Activated CD4-positive, alpha-beta memory T cell treated with anti-CD3 and anti-CD28 coated beads, Interleukin-2, amount 10 ng/mL, durations not matched to agents 7 days and 5 days (primary cell): ENCODE measurements at regions of chr9 and their contacts with region 1.

Region 1: DNA sequence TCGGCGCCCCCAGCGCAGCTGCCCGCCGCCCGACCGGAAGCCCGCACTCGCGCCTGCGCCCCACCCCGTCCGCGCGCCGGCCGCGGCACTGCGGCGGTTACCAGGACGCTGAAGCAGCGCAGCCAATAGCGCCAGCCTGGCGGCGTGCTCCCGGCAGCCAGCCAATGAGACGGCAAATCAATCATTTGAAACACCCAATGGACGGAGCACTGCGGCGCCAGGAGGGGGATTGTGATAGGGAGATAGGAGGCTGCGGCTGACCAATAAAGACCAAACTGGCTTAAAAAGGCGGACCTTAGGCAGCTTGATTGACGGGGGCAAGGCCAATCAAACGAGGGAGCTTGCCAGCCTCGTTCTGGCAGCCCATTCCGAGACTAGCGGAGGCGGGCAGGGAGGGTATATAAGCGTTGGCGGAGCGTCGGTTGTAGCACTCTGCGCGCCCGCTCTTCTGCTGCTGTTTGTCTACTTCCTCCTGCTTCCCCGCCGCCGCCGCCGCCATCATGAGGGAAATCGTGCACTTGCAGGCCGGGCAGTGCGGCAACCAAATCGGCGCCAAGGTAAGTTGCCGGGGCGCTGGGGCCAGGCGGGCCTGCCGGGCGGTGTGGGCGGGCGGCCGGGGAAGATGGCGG is at the start of gene TUBB4B:
- DNase-seq: peak; percentile 99
- H3K4me3 Mint-ChIP-seq: peak within 1 kb of the TSS; percentile 88
- H3K27ac Mint-ChIP-seq: peak within 1 kb of the TSS; percentile 94
- H3K4me1 Mint-ChIP-seq: peaks cover 47% of the 10 kb centered on the region
- H3K27me3 Mint-ChIP-seq: no peaks in the 10 kb centered on the region
- total RNA-seq, gene TUBB4B: 314 to 319 TPM

Region 2: DNA sequence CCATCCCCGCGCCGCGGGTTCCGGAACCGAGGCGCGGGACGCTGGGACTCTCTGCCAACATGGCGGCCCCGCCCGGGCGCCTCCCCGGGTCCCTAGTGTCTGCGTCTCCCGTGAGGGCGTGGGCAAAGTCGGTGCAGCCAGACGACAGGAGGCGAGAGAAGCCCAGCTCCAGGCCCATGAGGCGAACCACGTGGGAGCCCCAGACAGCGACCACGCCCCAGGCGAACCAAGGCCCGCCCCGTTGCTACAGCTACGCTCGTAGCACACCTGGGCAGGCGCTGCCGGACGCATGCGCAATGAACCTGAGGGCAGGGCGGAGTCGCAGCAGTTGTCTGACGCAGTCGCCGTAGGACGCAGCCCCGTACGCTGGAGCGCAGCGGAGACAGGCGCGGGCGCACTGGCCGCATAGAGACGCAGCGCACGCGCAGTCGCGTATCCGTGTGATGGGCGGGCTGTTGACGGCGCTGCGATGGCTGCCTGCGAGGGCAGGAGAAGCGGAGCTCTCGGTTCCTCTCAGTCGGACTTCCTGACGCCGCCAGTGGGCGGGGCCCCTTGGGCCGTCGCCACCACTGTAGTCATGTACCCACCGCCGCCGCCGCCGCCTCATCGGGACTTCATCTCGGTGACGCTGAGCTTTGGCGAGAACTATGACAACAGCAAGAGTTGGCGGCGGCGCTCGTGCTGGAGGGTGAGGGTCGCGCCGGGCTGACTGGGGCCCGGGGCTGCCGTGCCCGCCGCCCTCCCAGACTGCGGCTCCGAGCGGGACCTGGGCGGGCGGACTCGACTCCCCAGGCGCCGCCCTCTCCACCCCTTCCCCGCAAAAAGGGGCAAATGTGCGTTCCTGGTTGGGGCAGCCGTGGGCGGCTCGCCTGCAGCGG is 154.2 kb before region 1 on chr9 and contains the start of gene MAN1B1:
- CTCF ChIA-PET with region 1: interaction called, 10 read pairs
- POLR2A ChIA-PET with region 1: interaction called, 26 read pairs
- DNase-seq: peak; percentile 100
- H3K4me3 Mint-ChIP-seq: peak within 1 kb of the TSS; percentile 89
- H3K27ac Mint-ChIP-seq: peak within 1 kb of the TSS; percentile 90
- H3K4me1 Mint-ChIP-seq: peaks cover 46% of the 10 kb centered on the region
- H3K27me3 Mint-ChIP-seq: no peaks in the 10 kb centered on the region
- total RNA-seq, gene MAN1B1: 51.4 to 51.9 TPM

Region 3: DNA sequence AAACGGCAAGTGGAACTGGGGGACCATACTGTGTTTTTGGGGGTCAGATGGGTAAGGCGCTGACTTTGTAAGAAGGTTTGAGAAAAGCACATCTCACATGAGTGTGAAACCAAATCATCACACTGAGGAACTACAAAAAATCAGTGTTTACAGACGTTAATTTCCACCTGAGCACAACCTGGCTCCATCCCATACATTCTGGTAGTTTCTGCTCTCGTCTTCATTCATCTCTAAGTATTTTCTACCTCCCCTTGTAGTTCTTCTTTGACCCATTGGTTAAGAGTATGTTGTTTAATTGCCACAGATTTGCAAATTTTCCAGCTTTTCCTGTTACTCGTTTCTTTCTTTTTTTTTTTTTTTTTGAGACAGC is 117.5 kb before region 1 on chr9:
- CTCF ChIA-PET with region 1: interaction called, 21 read pairs
- POLR2A ChIA-PET with region 1: interaction called, 14 read pairs
- DNase-seq: no peak
- H3K4me3 Mint-ChIP-seq: no peak overlapping the region
- H3K27ac Mint-ChIP-seq: no peak overlapping the region
- H3K4me1 Mint-ChIP-seq: peaks cover 32% of the 10 kb centered on the region
- H3K27me3 Mint-ChIP-seq: no peaks in the 10 kb centered on the region

Region 4: GRCh38 chr9:137200311-137201204 is 40.4 kb before region 1 on chr9 and contains the start of gene TPRN:
- CTCF ChIA-PET with region 1: interaction called, 4 read pairs
- POLR2A ChIA-PET with region 1: interaction called, 27 read pairs
- DNase-seq: peak; percentile 99
- H3K4me3 Mint-ChIP-seq: peak within 1 kb of the TSS; percentile 78
- H3K27ac Mint-ChIP-seq: peak within 1 kb of the TSS; percentile 70
- H3K4me1 Mint-ChIP-seq: peaks cover 35% of the 10 kb centered on the region
- H3K27me3 Mint-ChIP-seq: no peaks in the 10 kb centered on the region
- total RNA-seq, gene TPRN: 8.5 to 9.4 TPM

Region 5: DNA sequence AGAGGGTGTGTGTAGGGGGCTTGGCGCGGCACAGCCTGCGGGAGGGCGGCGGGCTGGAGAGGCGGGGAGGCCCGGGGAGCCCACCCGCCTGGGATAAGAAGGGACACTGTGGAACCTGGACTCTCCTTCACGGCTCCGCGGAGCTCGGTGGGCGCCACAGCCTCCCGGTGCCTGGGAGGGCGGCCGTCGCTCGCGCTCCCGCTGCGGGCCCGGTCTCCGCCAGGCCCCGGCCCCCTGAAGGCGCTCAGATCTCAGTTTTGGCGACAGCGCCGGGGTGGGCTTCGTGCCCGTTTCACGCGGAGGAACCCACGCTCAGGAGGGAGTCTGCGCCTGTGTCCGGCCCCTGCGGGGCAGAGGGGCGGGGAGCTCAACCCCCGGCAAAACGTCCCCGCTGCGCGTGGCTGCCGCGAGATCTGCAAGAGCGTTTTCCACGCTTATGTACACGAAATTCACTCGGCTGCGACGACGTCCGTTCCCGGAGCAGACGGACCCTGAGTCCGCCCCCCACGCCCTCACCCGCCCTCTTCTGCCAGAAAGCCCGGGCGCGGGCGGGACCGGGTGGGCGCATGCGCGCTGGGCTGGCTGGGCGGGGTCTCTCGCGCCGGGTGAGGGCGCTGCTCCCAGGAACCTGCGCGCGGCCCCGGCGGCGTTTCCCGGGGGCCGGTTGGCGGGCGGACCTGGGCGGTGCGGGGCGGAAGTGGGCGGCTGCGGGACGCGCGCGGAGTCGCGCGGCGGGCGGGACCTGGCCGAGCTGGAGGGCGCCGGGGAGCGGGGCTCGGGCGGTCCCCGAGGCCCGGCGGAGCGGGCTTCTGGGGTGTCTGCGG is 13.9 kb after region 1 on chr9 and contains the start of gene NELFB:
- CTCF ChIA-PET with region 1: interaction called, 12 read pairs
- POLR2A ChIA-PET with region 1: interaction called, 251 read pairs
- DNase-seq: peak; percentile 96
- H3K4me3 Mint-ChIP-seq: peak within 1 kb of the TSS; percentile 89
- H3K27ac Mint-ChIP-seq: peak within 1 kb of the TSS; percentile 83
- H3K4me1 Mint-ChIP-seq: peaks cover 18% of the 10 kb centered on the region
- H3K27me3 Mint-ChIP-seq: peaks cover 3% of the 10 kb centered on the region
- total RNA-seq, gene NELFB: 58.8 to 59.6 TPM

Region 6: GRCh38 chr9:137423004-137423874 is 182.3 kb after region 1 on chr9 and contains the starts of genes EXD3 and NOXA1:
- CTCF ChIA-PET with region 1: no interaction called
- POLR2A ChIA-PET with region 1: interaction called, 10 read pairs
- DNase-seq: peak; percentile 96
- H3K4me3 Mint-ChIP-seq: peak within 1 kb of the TSS; percentile 78
- H3K27ac Mint-ChIP-seq: peak within 1 kb of the TSS; percentile 50
- H3K4me1 Mint-ChIP-seq: peaks cover 15% of the 10 kb centered on the region
- H3K27me3 Mint-ChIP-seq: peaks cover 7% of the 10 kb centered on the region
- total RNA-seq, gene EXD3: 17.9 to 18.1 TPM
- total RNA-seq, gene NOXA1: 0.50 to 0.73 TPM

Region 7: GRCh38 chr9:137445275-137445807 is 204.4 kb after region 1 on chr9:
- CTCF ChIA-PET with region 1: no interaction called
- POLR2A ChIA-PET with region 1: no interaction called
- DNase-seq: peak; percentile 88
- H3K4me3 Mint-ChIP-seq: no peak overlapping the region
- H3K27ac Mint-ChIP-seq: no peak overlapping the region
- H3K4me1 Mint-ChIP-seq: peaks cover 15% of the 10 kb centered on the region
- H3K27me3 Mint-ChIP-seq: peaks cover 15% of the 10 kb centered on the region